ENCODE measurements at regions of chr11 and their contacts with region 1.

Region 1: DNA sequence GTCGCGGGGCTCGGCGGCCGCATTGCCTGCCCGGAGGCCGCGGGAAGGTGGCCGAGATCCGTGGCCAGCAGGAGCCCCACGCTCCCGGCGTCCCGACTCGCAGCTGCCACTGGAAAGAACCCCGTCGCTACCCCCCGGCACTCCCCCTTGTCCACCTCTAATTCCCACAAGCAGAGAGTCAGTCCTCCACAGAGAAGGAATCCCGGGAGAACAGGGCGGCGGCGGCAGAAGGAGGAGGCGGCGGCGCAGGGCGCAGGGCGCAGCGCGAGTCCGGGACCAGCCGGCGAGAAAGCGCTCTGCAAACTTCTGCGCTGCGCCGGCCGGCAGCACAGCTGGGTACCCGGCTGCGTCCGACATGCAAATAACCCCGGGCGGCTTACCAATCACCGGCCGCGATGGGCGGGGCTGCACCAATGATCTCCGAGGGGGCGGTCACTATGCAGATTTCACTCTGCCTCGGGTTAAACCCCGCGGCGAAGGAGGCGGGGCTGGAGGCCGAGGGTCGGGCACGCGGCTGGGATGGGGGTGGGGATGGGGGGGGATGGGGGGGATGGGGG is at the start of gene ABTB2:
- DNase-seq: peak; percentile 94 to 99
- H3K4me3 ChIP-seq: peak within 1 kb of the TSS; percentile 81 to 84
- H3K27ac ChIP-seq: peak within 1 kb of the TSS; percentile 84 to 87
- H3K4me1 ChIP-seq: peaks cover 3 to 23% of the 10 kb centered on the region in 2 donors
- H3K27me3 ChIP-seq: no peaks in the 10 kb centered on the region
- CTCF ChIP-seq: no peak
- total RNA-seq, gene ABTB2: 7.9 TPM

Region 2: DNA sequence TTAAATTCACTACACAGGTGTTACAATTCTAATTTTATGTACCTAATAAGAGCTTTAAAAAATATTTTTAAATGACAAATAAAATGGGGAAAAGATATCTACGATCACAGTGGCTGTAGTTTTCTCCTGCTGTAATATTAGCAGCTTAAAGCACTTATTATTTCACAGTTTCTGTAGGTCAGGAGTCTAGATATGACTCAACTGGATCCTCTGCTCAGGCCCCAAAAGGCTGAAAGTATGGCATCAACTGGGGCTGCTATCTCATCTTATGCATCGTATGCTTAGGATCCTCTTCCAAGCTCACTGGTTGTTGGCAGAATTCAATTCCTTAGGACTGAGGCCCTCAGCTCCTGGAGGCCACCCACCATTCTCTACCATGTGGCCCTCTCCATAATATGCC is 596.3 kb before region 1 on chr11:
- intact Hi-C with region 1: no loop called
- DNase-seq: no peak
- H3K4me3 ChIP-seq: no peak overlapping the region
- H3K27ac ChIP-seq: no peak overlapping the region
- H3K4me1 ChIP-seq: no peaks in the 10 kb centered on the region
- H3K27me3 ChIP-seq: no peaks in the 10 kb centered on the region
- CTCF ChIP-seq: no peak

Region 3: DNA sequence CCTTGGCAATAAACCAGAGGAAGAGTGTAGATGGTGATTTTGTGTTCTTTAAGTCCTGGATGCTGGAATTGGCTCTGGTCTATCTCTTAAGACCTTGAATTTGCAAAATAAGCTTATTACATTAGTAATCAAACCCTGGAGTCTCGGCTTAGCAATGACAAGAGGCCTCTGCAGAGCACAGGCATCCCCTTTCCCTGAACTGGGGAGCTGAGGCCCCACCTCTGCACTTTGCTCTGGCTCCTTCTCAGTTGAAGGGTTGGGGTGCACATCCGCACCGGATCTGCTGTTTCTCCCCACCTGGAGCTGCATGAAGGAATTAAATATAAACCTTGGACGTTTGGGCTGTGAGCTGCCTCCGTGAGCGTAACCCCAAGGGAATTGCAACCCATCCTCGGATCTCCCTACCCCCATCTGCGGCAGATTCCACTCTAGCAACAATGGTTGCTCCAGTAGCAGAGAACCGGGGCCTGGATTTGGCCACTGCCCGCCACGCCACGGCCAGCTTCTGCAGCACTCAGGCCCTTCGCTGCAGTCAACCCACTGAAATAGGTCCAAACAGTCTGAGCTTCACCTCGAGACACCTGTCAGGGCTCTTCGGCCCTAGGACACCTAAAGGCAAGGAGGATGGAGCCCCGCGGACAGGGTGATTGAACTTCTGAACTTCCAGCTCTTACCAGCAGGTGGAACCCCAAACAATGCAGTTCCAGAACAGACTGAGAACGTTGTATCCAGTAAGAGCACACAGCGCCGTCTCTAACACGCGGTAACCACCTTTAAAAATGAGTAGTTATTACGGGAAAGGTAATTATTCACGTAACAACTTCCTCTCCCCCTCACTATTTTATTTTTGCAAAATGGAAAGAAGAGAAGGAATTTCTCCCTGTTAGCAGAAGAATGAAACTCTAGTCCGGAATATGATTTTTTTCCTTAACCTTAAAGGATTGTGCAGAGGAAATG is 361.0 kb before region 1 on chr11:
- intact Hi-C with region 1: loop called (anchors 1 kb)
- DNase-seq: peak in 1 of 2 donors; percentile 86
- H3K4me3 ChIP-seq: peak overlapping the region; percentile 7 to 33
- H3K27ac ChIP-seq: no peak overlapping the region
- H3K4me1 ChIP-seq: no peaks in the 10 kb centered on the region
- H3K27me3 ChIP-seq: no peaks in the 10 kb centered on the region
- CTCF ChIP-seq: peak; percentile 79 to 85 (median 81)

Region 4: GRCh38 chr11:34105079-34105956 is 252.5 kb before region 1 on chr11 and contains the start of gene NAT10:
- intact Hi-C with region 1: loop called (anchors 2 kb)
- DNase-seq: peak; percentile 93 to 99
- H3K4me3 ChIP-seq: peak within 1 kb of the TSS; percentile 82 to 86
- H3K27ac ChIP-seq: peak within 1 kb of the TSS; percentile 93 to 95
- H3K4me1 ChIP-seq: peaks cover 4 to 5% of the 10 kb centered on the region in 2 donors
- H3K27me3 ChIP-seq: no peaks in the 10 kb centered on the region
- CTCF ChIP-seq: no peak
- total RNA-seq, gene NAT10: 11.3 TPM

Region 5: DNA sequence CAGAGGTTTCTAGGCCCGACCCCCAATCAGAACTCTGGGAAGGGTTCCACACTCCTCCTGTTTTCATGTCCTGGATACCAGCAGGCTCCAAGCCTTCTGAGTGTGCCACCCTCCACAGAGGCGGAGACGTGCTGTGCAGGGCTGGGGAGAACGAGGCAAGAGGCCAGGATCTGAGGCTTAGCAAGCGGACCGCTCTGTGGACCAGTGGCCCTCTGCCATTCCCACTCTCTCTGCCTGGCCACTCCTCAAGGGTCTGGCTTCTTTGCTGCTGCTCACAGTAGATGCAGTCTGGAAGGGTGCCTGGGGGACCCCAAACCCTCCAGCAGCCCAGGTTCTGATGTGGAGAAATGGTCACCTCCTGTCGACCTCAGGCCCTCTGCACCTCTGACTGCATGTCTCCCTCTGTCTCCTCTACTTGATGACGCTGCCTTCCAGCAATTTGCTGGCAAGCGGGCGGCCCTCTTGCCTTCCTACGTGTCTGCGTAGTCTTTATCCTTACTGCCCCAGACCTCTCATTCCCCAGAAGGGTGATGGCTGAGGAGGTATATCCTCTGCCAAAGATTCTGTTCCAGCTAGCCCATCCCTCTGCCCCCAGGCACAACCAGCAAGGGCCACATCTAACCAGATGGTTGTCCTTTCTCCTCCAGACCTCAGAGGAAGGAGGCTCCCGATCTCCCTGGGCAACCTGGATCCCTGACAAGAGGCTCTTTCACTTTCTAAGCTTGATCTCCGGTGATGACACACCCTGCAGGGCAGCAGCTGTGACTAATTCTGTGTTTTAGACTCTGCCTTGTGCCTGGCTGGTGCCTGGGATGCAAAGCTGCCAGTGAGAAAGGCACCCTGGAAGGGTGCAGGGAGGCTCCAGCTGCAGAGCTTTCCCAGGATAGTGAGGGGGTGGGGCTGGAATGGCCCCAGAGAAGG is 165.0 kb before region 1 on chr11:
- intact Hi-C with region 1: loop called (anchors 1 kb)
- DNase-seq: peak; percentile 60 to 91
- H3K4me3 ChIP-seq: peak overlapping the region; percentile 6 to 36
- H3K27ac ChIP-seq: peak overlapping the region; percentile 85 to 86
- H3K4me1 ChIP-seq: peaks cover 0 to 30% of the 10 kb centered on the region in 2 donors
- H3K27me3 ChIP-seq: no peaks in the 10 kb centered on the region
- CTCF ChIP-seq: no peak

Region 6: GRCh38 chr11:34274723-34275401 is 82.9 kb before region 1 on chr11:
- intact Hi-C with region 1: loop called (anchors 2 kb)
- DNase-seq: peak; percentile 71 to 97
- H3K4me3 ChIP-seq: no peak overlapping the region
- H3K27ac ChIP-seq: peak overlapping the region; percentile 76 to 80
- H3K4me1 ChIP-seq: peaks cover 4 to 13% of the 10 kb centered on the region in 2 donors
- H3K27me3 ChIP-seq: no peaks in the 10 kb centered on the region
- CTCF ChIP-seq: no peak

Region 7: DNA sequence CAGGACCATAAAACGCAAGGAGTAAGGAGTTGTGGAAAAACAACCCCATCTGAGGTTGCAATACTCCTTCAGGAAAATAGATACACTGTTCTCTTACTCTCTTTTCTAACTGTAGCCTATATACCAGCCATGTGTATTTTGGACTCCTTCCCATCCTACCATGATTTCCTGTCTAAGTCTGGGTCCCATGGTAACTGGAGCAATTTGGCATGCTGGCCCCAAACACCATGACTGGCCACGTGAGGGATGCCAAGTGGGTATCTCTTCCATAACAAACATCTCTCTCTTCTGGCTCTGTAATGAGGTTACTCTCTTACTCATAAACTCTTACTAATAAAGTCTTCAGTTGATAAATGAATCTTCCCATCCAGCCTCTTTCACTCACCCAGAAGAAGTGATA is 26.4 kb before region 1 on chr11:
- intact Hi-C with region 1: loop called (anchors 2 kb)
- DNase-seq: no peak
- H3K4me3 ChIP-seq: no peak overlapping the region
- H3K27ac ChIP-seq: peak overlapping the region; percentile 47 to 65
- H3K4me1 ChIP-seq: peaks cover 14 to 44% of the 10 kb centered on the region in 2 donors
- H3K27me3 ChIP-seq: no peaks in the 10 kb centered on the region
- CTCF ChIP-seq: no peak

Region 8: DNA sequence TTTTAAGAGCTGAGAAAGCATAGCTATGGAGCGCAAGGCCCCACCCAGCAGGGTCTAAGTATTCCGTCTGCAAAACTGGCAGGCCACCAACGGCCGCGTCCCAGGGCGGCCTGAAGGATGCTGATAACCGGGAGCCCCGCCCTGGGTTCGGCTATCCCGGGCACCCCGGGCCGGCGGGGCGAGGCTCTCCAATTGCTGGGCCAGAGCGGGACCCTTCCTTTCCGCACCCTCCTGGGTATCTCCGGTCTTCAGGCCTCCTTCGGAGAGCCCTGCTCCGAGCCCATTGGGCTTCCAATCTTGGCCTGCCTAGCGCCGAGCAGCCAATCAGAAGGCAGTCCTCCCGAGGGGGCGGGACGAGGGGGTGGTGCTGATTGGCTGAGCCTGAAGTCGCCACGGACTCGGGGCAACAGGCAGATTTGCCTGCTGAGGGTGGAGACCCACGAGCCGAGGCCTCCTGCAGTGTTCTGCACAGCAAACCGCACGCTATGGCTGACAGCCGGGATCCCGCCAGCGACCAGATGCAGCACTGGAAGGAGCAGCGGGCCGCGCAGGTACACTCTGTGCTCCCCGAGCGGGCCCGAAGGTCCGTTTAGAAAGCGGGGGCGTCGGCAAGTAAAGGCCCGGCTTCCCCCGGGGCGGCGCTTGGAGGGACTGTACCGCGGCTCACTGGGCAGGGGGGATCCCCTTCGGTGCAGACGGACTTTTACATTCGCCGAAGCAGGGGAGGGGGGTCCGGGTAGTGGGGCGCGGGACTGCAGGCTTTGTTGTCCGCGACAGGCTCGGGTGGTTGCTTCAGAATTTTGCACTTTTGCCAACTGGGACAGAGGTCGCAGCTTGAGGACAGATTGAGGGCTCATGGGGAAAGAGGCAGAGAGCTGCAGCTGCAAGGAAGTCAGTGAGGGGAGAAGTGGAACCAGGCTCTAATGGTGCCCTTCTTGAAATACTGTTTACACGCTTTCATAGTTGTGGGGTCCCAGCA is 81.0 kb after region 1 on chr11 and contains the start of gene CAT:
- intact Hi-C with region 1: loop called (anchors 5 kb)
- DNase-seq: peak; percentile 92 to 98
- H3K4me3 ChIP-seq: peak within 1 kb of the TSS; percentile 87 to 88
- H3K27ac ChIP-seq: peak within 1 kb of the TSS; percentile 79 to 84
- H3K4me1 ChIP-seq: peaks cover 5 to 15% of the 10 kb centered on the region in 2 donors
- H3K27me3 ChIP-seq: no peaks in the 10 kb centered on the region
- CTCF ChIP-seq: no peak
- total RNA-seq, gene CAT: 69.2 TPM